ENCODE measurements at regions of chr17 and their contacts with region 1.

Region 1: GRCh38 chr17:47949136-47949759 is 7.9 kb downstream of the PNPO start:
- DNase-seq: peak; percentile 86
- H3K4me3 Mint-ChIP-seq: peak overlapping the region; percentile 49
- H3K27ac Mint-ChIP-seq: peak overlapping the region; percentile 21
- H3K4me1 Mint-ChIP-seq: peaks cover 14% of the 10 kb centered on the region
- H3K27me3 Mint-ChIP-seq: no peaks in the 10 kb centered on the region
- CTCF ChIP-seq: peak; percentile 86

Region 2: GRCh38 chr17:47905221-47905781 is 43.9 kb before region 1 on chr17:
- CTCF ChIA-PET with region 1: interaction called, 4 read pairs
- POLR2A ChIA-PET with region 1: interaction called, 20 read pairs
- intact Hi-C with region 1: no loop called
- DNase-seq: peak; percentile 33
- H3K4me3 Mint-ChIP-seq: no peak overlapping the region
- H3K27ac Mint-ChIP-seq: peak overlapping the region; percentile 21
- H3K4me1 Mint-ChIP-seq: peaks cover 30% of the 10 kb centered on the region
- H3K27me3 Mint-ChIP-seq: no peaks in the 10 kb centered on the region
- CTCF ChIP-seq: no peak

Region 3: GRCh38 chr17:47970704-47971463 is 21.6 kb after region 1 on chr17 and contains the start of gene CDK5RAP3:
- CTCF ChIA-PET with region 1: interaction called, 336 read pairs
- POLR2A ChIA-PET with region 1: interaction called, 256 read pairs
- intact Hi-C with region 1: loop called (anchors 1 kb)
- DNase-seq: peak; percentile 99
- H3K4me3 Mint-ChIP-seq: peak within 1 kb of the TSS; percentile 94
- H3K27ac Mint-ChIP-seq: peak within 1 kb of the TSS; percentile 88
- H3K4me1 Mint-ChIP-seq: peaks cover 29% of the 10 kb centered on the region
- H3K27me3 Mint-ChIP-seq: no peaks in the 10 kb centered on the region
- CTCF ChIP-seq: peak; percentile 91
- total RNA-seq, gene CDK5RAP3: 132 and 149 TPM in 2 replicates

Region 4: DNA sequence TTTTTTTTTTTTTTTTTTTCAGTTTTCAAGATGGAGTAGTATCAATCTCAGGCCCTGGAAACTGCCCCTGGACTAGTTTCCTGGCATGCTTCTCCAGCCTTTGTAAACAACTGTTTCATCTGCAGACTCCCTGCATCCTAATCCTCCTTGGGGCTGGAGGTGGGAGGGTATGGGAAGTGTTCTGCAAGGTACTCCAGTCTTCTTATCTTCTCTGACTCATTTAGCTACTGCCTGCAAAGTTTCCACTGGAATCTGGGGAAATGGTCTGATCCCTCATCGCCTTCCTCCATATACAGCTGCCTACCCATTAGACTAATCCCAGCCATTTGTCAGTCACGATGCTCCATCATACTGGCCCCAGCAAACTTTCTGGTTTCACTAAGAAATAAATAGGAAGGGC is 66.9 kb after region 1 on chr17:
- CTCF ChIA-PET with region 1: interaction called, 131 read pairs
- POLR2A ChIA-PET with region 1: interaction called, 13 read pairs
- intact Hi-C with region 1: loop called (anchors 1 kb)
- DNase-seq: no peak
- H3K4me3 Mint-ChIP-seq: no peak overlapping the region
- H3K27ac Mint-ChIP-seq: peak overlapping the region; percentile 55
- H3K4me1 Mint-ChIP-seq: peaks cover 5% of the 10 kb centered on the region
- H3K27me3 Mint-ChIP-seq: no peaks in the 10 kb centered on the region
- CTCF ChIP-seq: no peak